ENCODE measurements at regions of chr6 and their contacts with region 1.

Region 1: GRCh38 chr6:144215932-144216667 is 65.8 kb downstream of the STX11 start:
- DNase-seq: peak; percentile 97
- H3K4me3 Mint-ChIP-seq: peak overlapping the region; percentile 93
- H3K27ac Mint-ChIP-seq: peak overlapping the region; percentile 98
- H3K4me1 Mint-ChIP-seq: peaks cover 34% of the 10 kb centered on the region
- H3K27me3 Mint-ChIP-seq: peaks cover 9% of the 10 kb centered on the region

Region 2: DNA sequence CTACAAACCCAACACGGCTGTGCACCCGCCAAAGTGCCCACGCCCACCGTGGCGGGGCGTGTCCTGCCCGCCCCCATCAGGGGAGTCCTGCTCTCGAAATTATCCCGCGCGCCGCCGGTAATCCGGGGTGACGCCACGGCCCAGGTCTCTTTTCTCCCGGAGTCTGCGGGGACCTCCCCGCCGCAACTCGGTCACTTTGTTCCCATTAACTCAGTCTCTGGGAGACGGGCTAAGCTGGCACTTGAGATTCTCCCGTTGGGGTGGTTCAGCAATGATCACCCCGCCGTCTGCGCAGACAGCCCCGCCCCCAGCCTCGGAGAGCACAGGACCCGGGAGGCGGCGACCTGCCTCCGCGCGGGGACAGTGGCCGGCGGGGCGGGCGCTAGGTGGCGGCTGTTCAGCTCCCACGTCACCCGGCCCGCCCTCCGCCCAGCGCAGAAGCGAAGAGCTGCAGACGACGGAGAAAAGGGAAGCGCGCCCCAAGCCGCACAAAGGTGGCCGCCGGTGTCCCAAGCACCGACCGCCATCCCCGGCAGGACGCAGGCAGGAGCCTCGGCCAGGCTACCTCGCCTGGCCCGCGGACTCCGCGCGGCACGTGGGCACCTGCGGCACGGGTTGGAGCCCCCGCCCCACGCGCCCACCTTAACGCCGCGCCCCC is 152.2 kb before region 1 on chr6:
- intact Hi-C with region 1: loop called (anchors 1 kb)
- DNase-seq: peak; percentile 97
- H3K4me3 Mint-ChIP-seq: peak overlapping the region; percentile 92
- H3K27ac Mint-ChIP-seq: peak overlapping the region; percentile 91
- H3K4me1 Mint-ChIP-seq: peaks cover 41% of the 10 kb centered on the region
- H3K27me3 Mint-ChIP-seq: no peaks in the 10 kb centered on the region

Region 3: DNA sequence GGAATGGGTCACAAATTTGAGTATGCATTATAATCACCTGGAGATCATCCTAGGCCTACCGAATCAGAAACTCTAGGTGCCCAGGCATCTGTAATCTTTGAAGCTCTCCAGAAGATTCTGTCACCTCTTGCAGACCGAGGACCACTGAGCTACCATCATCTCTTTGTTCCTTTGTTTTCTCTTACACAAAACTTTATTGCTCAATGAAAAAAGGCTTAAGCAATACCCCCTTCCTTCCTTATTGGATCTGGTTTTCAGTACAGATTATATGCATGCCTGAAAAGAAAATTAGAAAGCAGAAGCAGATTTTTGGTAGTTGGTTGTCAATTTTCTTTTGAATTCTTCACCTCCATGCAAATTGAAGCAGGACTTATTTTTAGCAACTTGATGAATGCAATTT is 34.5 kb before region 1 on chr6:
- intact Hi-C with region 1: loop called (anchors 1 kb)
- DNase-seq: no peak
- H3K4me3 Mint-ChIP-seq: no peak overlapping the region
- H3K27ac Mint-ChIP-seq: no peak overlapping the region
- H3K4me1 Mint-ChIP-seq: peaks cover 43% of the 10 kb centered on the region
- H3K27me3 Mint-ChIP-seq: no peaks in the 10 kb centered on the region

Region 4: DNA sequence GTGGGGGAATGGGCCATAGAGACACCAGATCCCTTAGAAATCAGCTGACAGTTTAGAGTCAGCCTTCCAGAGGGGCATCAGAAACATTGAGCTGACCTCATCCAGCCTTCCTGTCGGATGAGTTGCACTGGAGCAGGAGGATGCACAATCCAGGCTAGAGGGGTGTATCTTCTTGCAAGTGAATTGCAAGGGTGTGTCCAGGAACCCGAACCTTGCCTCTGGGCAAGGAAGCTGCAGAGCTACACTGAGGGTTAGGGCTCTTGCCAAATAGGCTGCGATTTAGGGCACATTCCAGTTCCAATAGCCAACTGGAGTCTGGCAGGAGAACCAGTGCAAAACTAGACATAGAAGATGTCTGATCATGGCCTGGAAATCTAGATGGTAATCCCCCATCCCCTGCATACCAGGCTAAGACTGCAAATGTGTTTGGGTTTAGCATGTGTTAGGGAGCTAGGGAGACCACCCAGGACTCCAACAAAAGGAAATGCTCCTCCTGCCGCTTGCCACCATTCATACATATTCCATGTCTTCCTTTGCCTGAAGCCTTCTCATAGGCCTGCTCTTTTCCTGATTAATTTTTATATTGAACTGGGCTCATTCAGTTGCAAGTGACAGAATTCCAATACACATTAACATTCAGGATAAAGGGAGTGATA is 62.7 kb after region 1 on chr6:
- intact Hi-C with region 1: no loop called
- DNase-seq: no peak
- H3K4me3 Mint-ChIP-seq: no peak overlapping the region
- H3K27ac Mint-ChIP-seq: no peak overlapping the region
- H3K4me1 Mint-ChIP-seq: peaks cover 2% of the 10 kb centered on the region
- H3K27me3 Mint-ChIP-seq: peaks cover 16% of the 10 kb centered on the region

Region 5: DNA sequence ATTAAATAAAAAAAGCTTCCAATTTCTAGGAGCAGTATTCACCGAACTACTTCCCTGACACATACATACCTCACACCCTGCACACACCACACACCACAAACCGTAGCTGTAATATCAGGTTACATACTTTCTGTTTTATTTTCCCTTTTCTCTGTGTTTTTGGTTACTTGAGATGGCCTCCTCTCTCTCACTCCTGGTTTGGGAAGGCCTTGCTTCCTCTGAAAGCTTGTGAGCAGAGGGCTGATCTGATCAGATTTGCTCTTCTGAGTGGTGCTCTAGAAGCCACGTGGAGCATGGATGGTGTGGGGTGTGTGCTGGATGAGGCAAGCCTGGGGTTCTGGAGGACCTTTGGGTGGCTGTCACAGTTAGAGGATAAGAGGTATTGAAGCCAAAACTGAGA is 89.9 kb after region 1 on chr6:
- intact Hi-C with region 1: no loop called
- DNase-seq: peak; percentile 81
- H3K4me3 Mint-ChIP-seq: peak overlapping the region; percentile 63
- H3K27ac Mint-ChIP-seq: peak overlapping the region; percentile 82
- H3K4me1 Mint-ChIP-seq: peaks cover 33% of the 10 kb centered on the region
- H3K27me3 Mint-ChIP-seq: peaks cover 10% of the 10 kb centered on the region

Region 6: GRCh38 chr6:144349690-144350527 is 133.8 kb after region 1 on chr6:
- intact Hi-C with region 1: loop called (anchors 5 kb)
- DNase-seq: peak; percentile 78
- H3K4me3 Mint-ChIP-seq: peak overlapping the region; percentile 80
- H3K27ac Mint-ChIP-seq: peak overlapping the region; percentile 92
- H3K4me1 Mint-ChIP-seq: peaks cover 74% of the 10 kb centered on the region
- H3K27me3 Mint-ChIP-seq: no peaks in the 10 kb centered on the region

Measured in activated CD4-positive, alpha-beta T cell treated with anti-CD3 and anti-CD28 coated beads, Interleukin-2, amount 10 ng/mL, durations not matched to agents 24 days and 14 days (primary cell).